ENCODE measurements at regions of chr9 and their contacts with region 1.

Region 1: DNA sequence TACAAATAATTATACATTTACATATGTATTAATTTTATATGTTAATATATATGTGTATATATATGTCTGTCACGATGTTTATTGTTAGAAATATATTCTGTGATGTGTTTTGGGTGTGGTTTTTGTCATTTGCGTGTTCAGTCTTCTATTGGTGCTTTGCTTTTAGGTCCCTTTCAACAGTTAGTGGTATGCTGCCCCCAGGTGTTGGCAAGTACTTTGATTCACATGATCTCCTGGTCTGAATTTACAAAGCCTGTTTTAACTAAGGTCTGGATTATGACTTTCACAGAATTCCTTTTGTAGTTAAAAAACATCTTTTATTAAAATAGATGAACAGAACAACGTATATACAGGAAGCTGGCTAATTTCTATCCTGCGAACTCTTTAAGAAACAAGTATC is 271.5 kb downstream of the CCDC171 start:
- DNase-seq: peak; percentile 21
- ATAC-seq: no peak
- H3K4me3 ChIP-seq: no peak overlapping the region
- H3K27ac ChIP-seq: no peak overlapping the region
- H3K4me1 ChIP-seq: peaks cover 1% of the 10 kb centered on the region; the same call in 1 of the 2 replicates
- H3K27me3 ChIP-seq: no peaks in the 10 kb centered on the region
- CTCF ChIP-seq: no peak
- POLR2A ChIP-seq: no peak
- RAD21 ChIP-seq: peak; percentile 24; the same call in 1 of the 2 replicates

Region 2: DNA sequence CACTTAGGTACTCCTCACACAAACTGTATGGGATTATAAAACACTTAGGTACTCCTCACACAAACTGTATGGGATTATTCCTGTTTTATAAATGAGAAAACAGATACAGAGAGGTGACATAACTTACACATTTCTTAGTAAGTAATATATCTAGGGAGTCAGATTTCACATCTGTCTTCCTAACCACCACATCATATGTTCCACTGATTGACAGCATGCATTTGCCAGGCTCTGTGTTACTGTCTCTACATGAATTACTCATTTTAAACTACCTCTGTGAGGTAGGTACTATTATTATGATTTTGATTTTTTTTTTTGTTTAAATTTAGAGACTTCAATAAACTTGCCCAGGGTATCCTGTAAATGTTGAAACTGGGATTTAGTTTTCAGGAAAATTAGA is 38.7 kb before region 1 on chr9:
- CTCF ChIA-PET with region 1: no interaction called
- POLR2A ChIA-PET with region 1: no interaction called
- dilution Hi-C with region 1: no loop called
- in situ Hi-C with region 1: no loop called
- intact Hi-C with region 1: loop called (anchors 1 kb)
- DNase-seq: no peak
- ATAC-seq: no peak
- H3K4me3 ChIP-seq: no peak overlapping the region
- H3K27ac ChIP-seq: no peak overlapping the region
- H3K4me1 ChIP-seq: no peaks in the 10 kb centered on the region
- H3K27me3 ChIP-seq: no peaks in the 10 kb centered on the region
- CTCF ChIP-seq: no peak
- POLR2A ChIP-seq: no peak
- RAD21 ChIP-seq: no peak

Measured in IMR-90 (cell line).